ENCODE measurements at regions of chr5 and their contacts with region 1.

Region 1: DNA sequence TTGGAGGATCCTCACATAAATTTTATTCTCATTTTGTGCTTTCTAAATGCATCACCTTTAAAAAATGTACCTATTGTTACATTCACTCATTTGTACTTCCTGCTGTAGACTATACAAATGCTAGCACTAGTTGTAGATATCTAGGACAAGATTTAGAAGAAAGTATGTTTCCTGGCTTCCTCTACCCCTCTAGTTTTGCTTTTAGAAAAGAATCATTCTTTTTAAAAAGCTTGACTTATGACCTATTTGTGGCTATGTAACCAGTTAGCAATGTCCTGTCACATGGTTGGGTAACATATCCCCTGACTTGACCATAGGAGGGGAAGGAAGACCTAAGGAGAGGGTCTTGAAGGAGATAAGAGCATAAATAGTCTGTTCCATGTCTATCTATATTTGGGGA is 13.3 kb downstream of the CAMK4 start:
- DNase-seq: no peak
- CTCF ChIP-seq: no peak

Region 2: GRCh38 chr5:111004286-111004685 is 233.2 kb before region 1 on chr5:
- CTCF ChIA-PET with region 1: no interaction called
- POLR2A ChIA-PET with region 1: no interaction called
- DNase-seq: no peak
- CTCF ChIP-seq: no peak

Region 3: GRCh38 chr5:111083323-111083722 is 154.1 kb before region 1 on chr5:
- CTCF ChIA-PET with region 1: no interaction called
- POLR2A ChIA-PET with region 1: no interaction called
- DNase-seq: no peak
- CTCF ChIP-seq: no peak

Region 4: DNA sequence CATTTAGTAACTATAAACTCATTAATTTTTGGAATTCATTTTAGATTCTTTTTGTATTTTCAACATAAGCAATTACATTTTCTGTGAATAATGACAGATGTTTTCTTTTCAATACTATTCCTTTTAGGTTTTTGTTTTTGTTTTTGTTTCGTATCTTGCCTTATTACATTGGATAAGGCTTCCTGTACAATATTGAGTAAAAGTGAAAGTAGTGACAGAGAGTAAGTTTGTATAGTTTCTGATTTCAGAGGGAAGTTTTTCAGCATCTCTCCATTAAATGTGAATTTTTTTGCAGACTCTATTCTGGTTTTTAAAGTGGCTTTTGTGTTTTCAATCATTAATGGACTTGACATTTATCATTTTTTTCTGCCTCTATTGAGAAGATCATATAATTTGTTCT is 26.1 kb before region 1 on chr5:
- CTCF ChIA-PET with region 1: no interaction called
- POLR2A ChIA-PET with region 1: no interaction called
- DNase-seq: no peak
- CTCF ChIP-seq: no peak

Region 5: DNA sequence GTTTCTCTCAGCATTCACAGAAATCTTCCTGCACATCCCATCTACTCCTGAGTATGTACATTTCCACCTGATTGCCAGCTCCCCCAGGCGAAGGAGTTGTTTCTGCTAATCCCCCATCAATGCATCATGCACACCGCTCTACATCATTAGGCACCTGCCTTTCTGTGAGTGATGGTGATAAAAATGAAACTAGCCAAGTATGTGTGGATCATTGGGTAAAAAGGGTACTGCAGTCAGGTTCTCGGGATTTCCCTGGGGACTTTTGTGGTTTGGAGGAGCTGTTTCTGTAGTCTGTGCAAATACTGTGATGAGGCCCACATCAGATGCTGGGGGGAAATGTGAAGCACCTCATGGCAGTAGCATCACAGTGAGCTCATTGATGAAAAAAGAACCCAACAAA is 17.1 kb after region 1 on chr5:
- CTCF ChIA-PET with region 1: interaction called, 13 read pairs
- POLR2A ChIA-PET with region 1: interaction called, 5 read pairs
- DNase-seq: peak; percentile 64
- CTCF ChIP-seq: no peak

Region 6: DNA sequence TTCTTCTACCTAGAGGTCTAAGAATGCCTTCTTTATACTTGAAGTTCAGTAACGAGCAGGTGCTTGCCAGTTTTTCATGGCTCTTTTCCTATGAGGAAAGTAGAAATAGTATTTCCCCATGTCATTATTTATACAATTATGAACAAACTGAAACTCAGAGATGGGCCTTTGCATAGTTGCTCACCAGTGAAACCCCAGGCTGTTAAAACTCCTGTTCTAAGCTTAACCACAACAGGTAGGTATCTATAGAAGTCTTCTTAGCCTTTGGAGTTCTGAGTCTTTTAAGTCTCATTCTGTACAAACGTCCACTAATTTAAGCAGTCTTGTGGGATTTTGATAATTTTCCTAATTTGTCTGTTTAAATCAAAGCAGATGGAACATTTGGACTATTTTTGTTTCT is 184.8 kb after region 1 on chr5:
- CTCF ChIA-PET with region 1: no interaction called
- POLR2A ChIA-PET with region 1: no interaction called
- DNase-seq: no peak
- CTCF ChIP-seq: no peak

Measured in GM10248 (cell line).